Left ventricle myocardium inferior (tissue), 1 donor: ENCODE measurements at regions of chr4 and their contacts with region 1.

Region 1: DNA sequence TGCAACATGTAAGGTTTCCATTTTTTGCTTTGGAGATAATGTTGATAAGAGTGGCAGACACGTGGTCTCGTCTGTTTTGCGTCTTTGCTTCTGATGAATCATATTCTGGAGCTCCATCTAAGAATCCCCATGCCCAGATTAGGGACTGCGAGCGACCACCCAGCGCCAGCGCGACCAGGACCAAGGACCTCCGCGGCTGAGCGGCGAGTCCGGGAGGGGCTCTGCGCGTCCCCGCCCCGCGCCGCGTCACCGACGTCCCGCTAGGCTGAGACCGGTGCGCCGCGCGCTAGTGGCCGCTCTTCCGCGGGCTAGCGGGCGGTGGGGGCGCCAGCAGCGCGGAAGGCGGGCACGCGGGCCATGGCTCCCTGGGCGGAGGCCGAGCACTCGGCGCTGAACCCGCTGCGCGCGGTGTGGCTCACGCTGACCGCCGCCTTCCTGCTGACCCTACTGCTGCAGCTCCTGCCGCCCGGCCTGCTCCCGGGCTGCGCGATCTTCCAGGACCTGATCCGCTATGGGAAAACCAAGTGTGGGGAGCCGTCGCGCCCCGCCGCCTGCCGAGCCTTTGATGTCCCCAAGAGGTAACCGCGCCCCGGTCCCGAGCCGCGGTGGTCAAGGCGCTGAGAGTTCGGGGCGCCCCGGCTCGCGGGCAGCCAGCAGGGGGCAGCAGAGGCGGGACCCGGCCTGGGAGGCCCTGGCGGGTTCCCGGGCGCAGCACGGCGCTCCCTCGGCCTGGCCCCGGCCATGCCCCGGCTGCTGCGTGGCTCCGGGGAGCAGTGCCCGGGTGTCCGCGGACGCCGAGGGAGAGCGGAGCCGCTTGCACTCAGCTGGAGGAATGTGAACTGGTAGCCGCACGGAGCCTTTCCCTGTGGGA is at the start of gene SRD5A3:
- DNase-seq: peak; percentile 89
- H3K4me3 ChIP-seq: peak within 1 kb of the TSS; percentile 82
- H3K27ac ChIP-seq: peak within 1 kb of the TSS; percentile 98
- H3K4me1 ChIP-seq: peaks cover 30% of the 10 kb centered on the region
- H3K27me3 ChIP-seq: no peaks in the 10 kb centered on the region
- CTCF ChIP-seq: peak; percentile 98
- total RNA-seq, gene SRD5A3: 6.8 TPM

Region 2: GRCh38 chr4:54742636-54743399 is 603.4 kb before region 1 on chr4:
- intact Hi-C with region 1: no loop called
- DNase-seq: no peak
- H3K4me3 ChIP-seq: no peak overlapping the region
- H3K27ac ChIP-seq: no peak overlapping the region
- H3K4me1 ChIP-seq: no peaks in the 10 kb centered on the region
- H3K27me3 ChIP-seq: no peaks in the 10 kb centered on the region
- CTCF ChIP-seq: no peak

Region 3: DNA sequence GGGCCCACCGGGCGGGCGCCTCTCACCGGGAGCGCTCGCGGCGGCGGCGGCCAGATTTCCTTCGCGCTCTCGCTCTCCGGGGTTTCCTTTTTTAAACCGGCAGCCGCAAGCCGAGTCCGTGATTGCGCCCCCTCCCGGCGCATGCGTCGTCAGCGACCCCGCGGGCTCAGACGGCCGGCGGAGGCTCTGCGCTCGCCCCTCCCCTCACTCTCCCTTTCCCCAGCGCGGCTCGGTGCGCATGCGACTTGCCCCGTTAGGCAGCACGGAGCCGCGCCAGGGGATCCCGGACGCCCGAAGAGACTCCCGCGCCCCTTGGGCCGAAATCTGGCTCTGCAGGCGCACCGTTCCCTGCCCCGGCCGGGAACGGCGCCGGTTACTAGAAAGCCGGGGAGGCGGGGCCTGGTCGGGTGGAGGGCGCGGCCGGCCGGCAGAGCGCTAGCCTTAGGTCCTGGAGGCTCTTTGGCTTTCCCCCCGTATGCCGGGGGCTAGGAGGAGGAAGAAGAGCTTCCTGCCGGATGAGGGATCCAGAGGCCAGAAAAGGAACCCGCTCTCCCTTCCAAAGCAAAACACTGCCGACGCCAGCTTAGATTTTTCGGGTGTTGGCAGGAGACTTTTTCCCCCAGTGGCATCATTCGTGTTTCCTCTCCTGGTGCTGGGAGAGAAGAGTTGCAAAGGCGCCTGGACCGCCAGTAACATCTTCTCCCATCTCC is 200.7 kb after region 1 on chr4 and contains the start of gene CLOCK:
- intact Hi-C with region 1: loop called (anchors 10 kb)
- DNase-seq: peak; percentile 89
- H3K4me3 ChIP-seq: peak within 1 kb of the TSS; percentile 99
- H3K27ac ChIP-seq: peak within 1 kb of the TSS; percentile 99
- H3K4me1 ChIP-seq: peaks cover 46% of the 10 kb centered on the region
- H3K27me3 ChIP-seq: no peaks in the 10 kb centered on the region
- CTCF ChIP-seq: peak; percentile 73
- total RNA-seq, gene CLOCK: 34.2 TPM

Region 4: DNA sequence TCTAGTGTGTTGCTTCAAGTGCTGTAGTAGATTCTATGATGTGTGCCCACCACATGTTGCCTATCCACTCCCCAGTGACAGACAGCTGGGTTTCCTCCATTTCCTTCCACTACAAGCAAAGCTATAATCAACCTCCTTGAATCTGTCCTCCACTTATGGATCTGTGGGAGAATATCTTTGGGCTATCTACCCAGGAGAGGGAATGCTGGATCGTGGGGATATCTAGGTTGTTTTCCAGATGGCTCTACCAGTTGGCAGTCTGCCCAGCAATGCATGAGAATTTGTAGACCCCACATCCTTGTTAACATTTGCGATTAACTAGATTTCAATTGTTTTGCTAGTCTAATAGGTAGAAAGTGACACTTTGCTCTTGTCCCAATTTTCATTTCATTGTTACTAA is 279.6 kb after region 1 on chr4:
- intact Hi-C with region 1: no loop called
- DNase-seq: no peak
- H3K4me3 ChIP-seq: no peak overlapping the region
- H3K27ac ChIP-seq: no peak overlapping the region
- H3K4me1 ChIP-seq: no peaks in the 10 kb centered on the region
- H3K27me3 ChIP-seq: peaks cover 22% of the 10 kb centered on the region
- CTCF ChIP-seq: no peak